ENCODE measurements at regions of chr6 and their contacts with region 1.

Region 1: GRCh38 chr6:111427341-111428116 is 55.5 kb downstream of the REV3L start:
- DNase-seq: peak in 1 of 9 donors; percentile 13
- ATAC-seq: peak; percentile 82
- H3K4me3 ChIP-seq: no peak overlapping the region
- H3K4me3 Mint-ChIP-seq: peak overlapping the region; percentile 26 to 74 (median 65)
- H3K27ac ChIP-seq: no peak overlapping the region
- H3K27ac Mint-ChIP-seq: no peak overlapping the region
- H3K4me1 ChIP-seq: peaks cover 0 to 8% of the 10 kb centered on the region in 2 donors
- H3K4me1 Mint-ChIP-seq: peaks cover 39 to 74% (median 55%) of the 10 kb centered on the region in 7 donors
- H3K27me3 ChIP-seq: no peaks in the 10 kb centered on the region
- H3K27me3 Mint-ChIP-seq: no peaks in the 10 kb centered on the region

Region 2: DNA sequence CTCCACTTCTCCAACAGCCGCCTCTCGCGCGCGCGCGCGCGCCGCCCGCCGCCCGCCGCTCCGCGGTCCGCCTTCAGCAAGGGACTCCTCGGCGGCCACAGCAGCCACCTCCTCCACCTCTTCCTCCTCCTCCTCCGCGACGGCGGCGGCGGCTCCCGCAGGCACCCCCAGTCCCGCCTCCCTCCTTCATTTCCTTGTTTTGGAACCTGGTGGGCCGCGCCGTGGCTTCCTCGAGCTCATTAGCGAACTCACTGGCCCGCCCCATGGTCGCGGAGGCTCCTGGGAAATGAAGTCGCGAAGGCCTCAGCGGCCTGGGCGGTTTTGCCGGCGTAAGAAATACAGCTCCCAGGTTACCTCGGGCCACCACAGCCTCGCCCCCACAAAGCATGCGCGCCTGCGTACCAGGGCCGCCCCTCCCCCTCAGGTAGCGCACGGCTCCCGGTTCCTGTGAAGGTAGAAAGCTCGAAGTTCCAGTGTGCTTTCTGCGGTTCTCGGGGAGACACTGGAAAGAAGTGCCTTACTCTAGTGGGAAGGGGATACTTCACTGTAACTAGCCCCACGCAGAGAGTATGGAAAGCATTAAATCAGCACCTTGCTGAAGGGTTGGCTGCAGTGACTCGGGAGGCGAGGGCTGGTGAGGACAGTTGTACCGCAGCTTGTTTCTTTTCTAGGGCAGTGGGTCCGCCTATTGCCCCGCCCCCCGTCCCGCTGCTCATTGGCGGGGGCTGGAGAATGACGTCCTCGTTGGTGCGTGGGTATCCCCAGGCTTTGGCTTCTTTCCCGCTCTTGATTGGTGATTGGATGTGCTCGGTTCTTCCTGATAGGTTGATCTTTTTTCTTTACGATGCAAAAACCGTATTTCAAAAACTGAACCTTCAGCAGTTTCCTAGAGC is 612.1 kb before region 1 on chr6 and contains the start of gene CDK19:
- CTCF ChIA-PET with region 1: no interaction called
- POLR2A ChIA-PET with region 1: no interaction called
- intact Hi-C with region 1: no loop called
- DNase-seq: peak; percentile 94 to 99 (median 99)
- ATAC-seq: peak; percentile 87
- H3K4me3 ChIP-seq: peak within 1 kb of the TSS; percentile 97
- H3K4me3 Mint-ChIP-seq: peak within 1 kb of the TSS; percentile 94 to 100 (median 98)
- H3K27ac ChIP-seq: peak within 1 kb of the TSS; percentile 89
- H3K27ac Mint-ChIP-seq: peak within 1 kb of the TSS; percentile 89 to 100 (median 99)
- H3K4me1 ChIP-seq: peaks cover 11 to 15% of the 10 kb centered on the region in 2 donors
- H3K4me1 Mint-ChIP-seq: peaks cover 14 to 46% (median 26%) of the 10 kb centered on the region in 7 donors
- H3K27me3 ChIP-seq: no peaks in the 10 kb centered on the region
- H3K27me3 Mint-ChIP-seq: no peaks in the 10 kb centered on the region
- total RNA-seq, gene CDK19: 11.3 to 24.4 (median 21.0) TPM

Region 3: DNA sequence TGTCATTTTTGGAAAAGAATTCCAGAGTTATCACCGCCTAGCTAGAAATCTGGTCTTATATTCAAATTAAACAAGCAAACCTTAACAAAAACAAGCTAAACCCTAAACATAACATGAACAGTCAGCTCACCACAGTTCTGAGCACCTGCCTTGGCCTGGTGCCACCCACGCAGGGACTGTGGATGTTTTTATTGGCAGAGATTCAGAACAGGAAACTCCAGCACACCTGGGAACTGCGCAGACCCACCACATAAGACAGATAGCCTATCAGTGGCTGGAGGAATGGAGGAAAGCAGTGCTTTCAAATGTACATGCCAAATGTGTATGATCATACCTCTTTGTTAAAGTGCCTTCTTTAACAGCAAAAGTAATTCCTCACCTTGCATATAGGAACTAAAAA is 331.3 kb before region 1 on chr6:
- CTCF ChIA-PET with region 1: no interaction called
- POLR2A ChIA-PET with region 1: no interaction called
- intact Hi-C with region 1: no loop called
- DNase-seq: peak in 8 of 9 donors; percentile 15 to 85 (median 82)
- ATAC-seq: peak; percentile 90
- H3K4me3 ChIP-seq: no peak overlapping the region
- H3K4me3 Mint-ChIP-seq: peak overlapping the region in 9 of 10 donors; percentile 38 to 82 (median 68)
- H3K27ac ChIP-seq: peak overlapping the region; percentile 45
- H3K27ac Mint-ChIP-seq: peak overlapping the region; percentile 38 to 95 (median 92)
- H3K4me1 ChIP-seq: peaks cover 0 to 30% of the 10 kb centered on the region in 2 donors
- H3K4me1 Mint-ChIP-seq: peaks cover 7 to 68% (median 53%) of the 10 kb centered on the region in 7 donors
- H3K27me3 ChIP-seq: no peaks in the 10 kb centered on the region
- H3K27me3 Mint-ChIP-seq: no peaks in the 10 kb centered on the region

Region 4: DNA sequence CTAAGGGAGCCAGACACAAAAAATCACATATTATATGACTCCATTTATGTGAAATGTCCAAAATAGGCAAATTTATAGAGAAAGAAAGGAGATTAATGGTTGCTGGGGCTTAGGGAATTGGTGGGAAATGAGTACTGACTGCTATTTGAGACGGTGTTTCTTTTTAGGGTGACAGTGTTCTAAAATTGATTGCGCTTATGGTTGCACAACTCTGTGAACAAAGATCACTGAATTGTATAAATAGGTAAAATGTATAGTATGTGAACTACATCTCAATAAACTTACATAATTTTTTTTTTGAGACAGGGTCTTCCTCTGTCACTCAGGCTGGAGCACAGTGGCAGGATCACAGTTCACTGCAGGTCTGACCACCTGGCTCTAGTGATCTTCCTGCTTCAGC is 10.0 kb after region 1 on chr6:
- CTCF ChIA-PET with region 1: no interaction called
- POLR2A ChIA-PET with region 1: no interaction called
- intact Hi-C with region 1: loop called in 1 of 2 experiments (anchors 2 kb)
- DNase-seq: no peak
- ATAC-seq: no peak
- H3K4me3 ChIP-seq: no peak overlapping the region
- H3K4me3 Mint-ChIP-seq: no peak overlapping the region
- H3K27ac ChIP-seq: no peak overlapping the region
- H3K27ac Mint-ChIP-seq: no peak overlapping the region
- H3K4me1 ChIP-seq: no peaks in the 10 kb centered on the region
- H3K4me1 Mint-ChIP-seq: peaks cover 26 to 68% (median 44%) of the 10 kb centered on the region in 7 donors
- H3K27me3 ChIP-seq: no peaks in the 10 kb centered on the region
- H3K27me3 Mint-ChIP-seq: no peaks in the 10 kb centered on the region

Region 5: GRCh38 chr6:111462770-111463391 is 35.4 kb after region 1 on chr6:
- CTCF ChIA-PET with region 1: no interaction called
- POLR2A ChIA-PET with region 1: no interaction called
- intact Hi-C with region 1: loop called in 1 of 2 experiments (anchors 5 kb)
- DNase-seq: no peak
- ATAC-seq: peak; percentile 44
- H3K4me3 ChIP-seq: no peak overlapping the region
- H3K4me3 Mint-ChIP-seq: peak overlapping the region in 5 of 10 donors; percentile 10 to 77 (median 39)
- H3K27ac ChIP-seq: no peak overlapping the region
- H3K27ac Mint-ChIP-seq: peak overlapping the region in 5 of 9 donors; percentile 8 to 76 (median 26)
- H3K4me1 ChIP-seq: no peaks in the 10 kb centered on the region
- H3K4me1 Mint-ChIP-seq: peaks cover 14 to 42% (median 33%) of the 10 kb centered on the region in 7 donors
- H3K27me3 ChIP-seq: no peaks in the 10 kb centered on the region
- H3K27me3 Mint-ChIP-seq: no peaks in the 10 kb centered on the region

Region 6: GRCh38 chr6:111534231-111534751 is 106.8 kb after region 1 on chr6:
- CTCF ChIA-PET with region 1: no interaction called
- POLR2A ChIA-PET with region 1: no interaction called
- intact Hi-C with region 1: no loop called
- DNase-seq: no peak
- ATAC-seq: peak; percentile 48
- H3K4me3 ChIP-seq: no peak overlapping the region
- H3K4me3 Mint-ChIP-seq: no peak overlapping the region
- H3K27ac ChIP-seq: no peak overlapping the region
- H3K27ac Mint-ChIP-seq: no peak overlapping the region
- H3K4me1 ChIP-seq: peaks cover 3 to 6% of the 10 kb centered on the region in 2 donors
- H3K4me1 Mint-ChIP-seq: peaks cover 18 to 31% (median 22%) of the 10 kb centered on the region in 7 donors
- H3K27me3 ChIP-seq: no peaks in the 10 kb centered on the region
- H3K27me3 Mint-ChIP-seq: no peaks in the 10 kb centered on the region

Region 7: GRCh38 chr6:111793711-111794111 is 366.2 kb after region 1 on chr6:
- CTCF ChIA-PET with region 1: no interaction called
- POLR2A ChIA-PET with region 1: no interaction called
- intact Hi-C with region 1: no loop called
- DNase-seq: peak in 1 of 9 donors; percentile 32
- ATAC-seq: peak; percentile 83
- H3K4me3 ChIP-seq: peak overlapping the region; percentile 63
- H3K4me3 Mint-ChIP-seq: peak overlapping the region in 9 of 10 donors; percentile 51 to 79 (median 62)
- H3K27ac ChIP-seq: peak overlapping the region; percentile 53
- H3K27ac Mint-ChIP-seq: peak overlapping the region in 8 of 9 donors; percentile 46 to 91 (median 84)
- H3K4me1 ChIP-seq: peaks cover 68% of the 10 kb centered on the region in 2 donors
- H3K4me1 Mint-ChIP-seq: peaks cover 6 to 67% (median 9%) of the 10 kb centered on the region in 7 donors
- H3K27me3 ChIP-seq: no peaks in the 10 kb centered on the region
- H3K27me3 Mint-ChIP-seq: no peaks in the 10 kb centered on the region

Measured in naive thymus-derived CD4-positive, alpha-beta T cell (primary cell).